ENCODE measurements at regions of chr11 and their contacts with region 1.

Region 1: GRCh38 chr11:121112498-121113455 is 11.7 kb downstream of the TECTA start:
- DNase-seq: peak; percentile 78 to 80
- H3K4me3 ChIP-seq: no peak overlapping the region
- H3K4me3 Mint-ChIP-seq: no peak overlapping the region
- H3K27ac Mint-ChIP-seq: no peak overlapping the region
- H3K4me1 ChIP-seq: no peaks in the 10 kb centered on the region
- H3K4me1 Mint-ChIP-seq: no peaks in the 10 kb centered on the region
- H3K27me3 ChIP-seq: no peaks in the 10 kb centered on the region; the same call in 1 of the 2 replicates
- H3K27me3 Mint-ChIP-seq: peaks cover 14% of the 10 kb centered on the region
- CTCF ChIP-seq: peak; percentile 80 to 83

Region 2: GRCh38 chr11:120511116-120511819 is 601.5 kb before region 1 on chr11 and contains the start of gene GRIK4:
- CTCF ChIA-PET with region 1: no interaction called
- POLR2A ChIA-PET with region 1: no interaction called
- intact Hi-C with region 1: loop called (anchors 2 kb)
- DNase-seq: peak; percentile 88 to 95
- H3K4me3 ChIP-seq: peak within 1 kb of the TSS; percentile 55
- H3K4me3 Mint-ChIP-seq: peak within 1 kb of the TSS; percentile 53
- H3K27ac Mint-ChIP-seq: no peak within 1 kb of the TSS
- H3K4me1 ChIP-seq: no peaks in the 10 kb centered on the region
- H3K4me1 Mint-ChIP-seq: peaks cover 5% of the 10 kb centered on the region
- H3K27me3 ChIP-seq: peaks cover 2% of the 10 kb centered on the region; the same call in 1 of the 2 replicates
- H3K27me3 Mint-ChIP-seq: peaks cover 25% of the 10 kb centered on the region
- CTCF ChIP-seq: peak; percentile 98 to 99
- total RNA-seq, gene GRIK4: 2.0 and 3.6 TPM in 2 replicates

Region 3: GRCh38 chr11:120929664-120930154 is 183.1 kb before region 1 on chr11:
- CTCF ChIA-PET with region 1: no interaction called
- POLR2A ChIA-PET with region 1: no interaction called
- intact Hi-C with region 1: loop called (anchors 2 kb)
- DNase-seq: peak; percentile 77 to 81
- H3K4me3 ChIP-seq: no peak overlapping the region
- H3K4me3 Mint-ChIP-seq: no peak overlapping the region
- H3K27ac Mint-ChIP-seq: no peak overlapping the region
- H3K4me1 ChIP-seq: peaks cover 6% of the 10 kb centered on the region; the same call in 1 of the 2 replicates
- H3K4me1 Mint-ChIP-seq: peaks cover 10% of the 10 kb centered on the region
- H3K27me3 ChIP-seq: no peaks in the 10 kb centered on the region; the same call in 1 of the 2 replicates
- H3K27me3 Mint-ChIP-seq: peaks cover 5% of the 10 kb centered on the region
- CTCF ChIP-seq: peak; percentile 86 to 89

Region 4: GRCh38 chr11:120985718-120986569 is 126.8 kb before region 1 on chr11:
- CTCF ChIA-PET with region 1: no interaction called
- POLR2A ChIA-PET with region 1: no interaction called
- intact Hi-C with region 1: no loop called
- DNase-seq: peak; percentile 72 to 79
- H3K4me3 ChIP-seq: peak overlapping the region; percentile 38
- H3K4me3 Mint-ChIP-seq: peak overlapping the region; percentile 73
- H3K27ac Mint-ChIP-seq: no peak overlapping the region
- H3K4me1 ChIP-seq: no peaks in the 10 kb centered on the region
- H3K4me1 Mint-ChIP-seq: peaks cover 5% of the 10 kb centered on the region
- H3K27me3 ChIP-seq: no peaks in the 10 kb centered on the region; the same call in 1 of the 2 replicates
- H3K27me3 Mint-ChIP-seq: peaks cover 34% of the 10 kb centered on the region
- CTCF ChIP-seq: peak; percentile 42 to 61

Region 5: GRCh38 chr11:121023848-121024751 is 88.7 kb before region 1 on chr11 and contains the start of gene TBCEL:
- CTCF ChIA-PET with region 1: no interaction called
- POLR2A ChIA-PET with region 1: no interaction called
- intact Hi-C with region 1: loop called (anchors 2 kb)
- DNase-seq: peak; percentile 95 to 96
- H3K4me3 ChIP-seq: peak within 1 kb of the TSS; percentile 98
- H3K4me3 Mint-ChIP-seq: peak within 1 kb of the TSS; percentile 73
- H3K27ac Mint-ChIP-seq: peak within 1 kb of the TSS; percentile 77
- H3K4me1 ChIP-seq: peaks cover 4% of the 10 kb centered on the region; the same call in 1 of the 2 replicates
- H3K4me1 Mint-ChIP-seq: peaks cover 19% of the 10 kb centered on the region
- H3K27me3 ChIP-seq: no peaks in the 10 kb centered on the region
- H3K27me3 Mint-ChIP-seq: peaks cover 3% of the 10 kb centered on the region
- CTCF ChIP-seq: no peak
- total RNA-seq, gene TBCEL: 23.6 and 24.3 TPM in 2 replicates

Region 6: DNA sequence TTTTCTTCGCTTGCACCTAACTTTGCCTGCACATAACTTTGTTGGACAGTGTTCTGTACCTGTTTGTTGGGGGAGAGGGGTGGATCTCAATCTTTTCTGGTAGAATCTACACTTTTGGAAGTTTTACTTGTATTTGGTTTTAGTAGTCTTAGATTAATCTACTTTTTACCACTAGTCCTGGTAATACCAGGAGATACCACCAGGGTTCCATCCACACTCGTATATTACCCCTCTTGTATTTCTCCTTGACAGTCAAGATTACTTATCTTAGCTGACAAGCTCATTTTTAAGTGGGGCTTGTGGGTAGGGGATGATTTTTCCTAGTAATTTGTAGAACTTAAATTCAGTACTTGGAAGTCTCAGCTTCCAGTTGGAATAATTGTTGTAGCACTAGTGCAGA is 49.0 kb before region 1 on chr11:
- CTCF ChIA-PET with region 1: no interaction called
- POLR2A ChIA-PET with region 1: no interaction called
- intact Hi-C with region 1: loop called (anchors 2 kb)
- DNase-seq: peak in 1 of 2 experiments; percentile 21
- H3K4me3 ChIP-seq: no peak overlapping the region
- H3K4me3 Mint-ChIP-seq: no peak overlapping the region
- H3K27ac Mint-ChIP-seq: no peak overlapping the region
- H3K4me1 ChIP-seq: peaks cover 20% of the 10 kb centered on the region
- H3K4me1 Mint-ChIP-seq: peaks cover 26% of the 10 kb centered on the region
- H3K27me3 ChIP-seq: no peaks in the 10 kb centered on the region
- H3K27me3 Mint-ChIP-seq: no peaks in the 10 kb centered on the region
- CTCF ChIP-seq: peak; percentile 42 to 67

Region 7: GRCh38 chr11:121132196-121132976 is 19.6 kb after region 1 on chr11:
- CTCF ChIA-PET with region 1: no interaction called
- POLR2A ChIA-PET with region 1: no interaction called
- intact Hi-C with region 1: no loop called
- DNase-seq: no peak
- H3K4me3 ChIP-seq: no peak overlapping the region
- H3K4me3 Mint-ChIP-seq: no peak overlapping the region
- H3K27ac Mint-ChIP-seq: no peak overlapping the region
- H3K4me1 ChIP-seq: no peaks in the 10 kb centered on the region
- H3K4me1 Mint-ChIP-seq: peaks cover 6% of the 10 kb centered on the region
- H3K27me3 ChIP-seq: no peaks in the 10 kb centered on the region
- H3K27me3 Mint-ChIP-seq: peaks cover 11% of the 10 kb centered on the region
- CTCF ChIP-seq: peak; percentile 11 to 31